ENCODE measurements at regions of chr5 and their contacts with region 1.

Region 1: DNA sequence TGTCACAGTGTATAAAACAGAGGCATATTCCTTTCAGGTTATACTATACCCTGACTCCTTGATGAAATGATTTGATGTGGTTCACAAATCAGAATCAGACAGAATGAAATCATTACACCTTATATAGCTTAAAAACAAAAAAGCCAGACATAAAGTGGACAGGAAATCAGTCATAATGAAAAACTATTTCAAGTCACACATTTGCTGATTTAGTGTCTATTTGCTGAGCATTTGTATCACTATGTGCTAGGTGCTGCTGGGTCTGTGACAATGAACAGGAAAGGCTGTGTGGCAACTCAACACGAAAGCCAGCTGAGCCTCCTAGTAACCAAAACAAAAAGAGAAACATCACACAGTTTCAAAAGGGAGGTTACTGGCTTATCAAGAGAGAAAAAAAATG is 194.0 kb downstream of the EFNA5 start:
- DNase-seq: peak; percentile 80
- ATAC-seq: peak; percentile 90
- H3K4me3 ChIP-seq: no peak overlapping the region
- H3K27ac ChIP-seq: peak overlapping the region; percentile 50
- H3K4me1 ChIP-seq: peaks cover 23% of the 10 kb centered on the region
- H3K27me3 ChIP-seq: no peaks in the 10 kb centered on the region; a peak in 1 of 4 replicates
- CTCF ChIP-seq: no peak
- EP300 ChIP-seq: peak; percentile 83 to 99
- POLR2A ChIP-seq: no peak
- RAD21 ChIP-seq: 0 out of 2 replicates have a peak, but pooled peaks have one; percentile 4

Region 2: DNA sequence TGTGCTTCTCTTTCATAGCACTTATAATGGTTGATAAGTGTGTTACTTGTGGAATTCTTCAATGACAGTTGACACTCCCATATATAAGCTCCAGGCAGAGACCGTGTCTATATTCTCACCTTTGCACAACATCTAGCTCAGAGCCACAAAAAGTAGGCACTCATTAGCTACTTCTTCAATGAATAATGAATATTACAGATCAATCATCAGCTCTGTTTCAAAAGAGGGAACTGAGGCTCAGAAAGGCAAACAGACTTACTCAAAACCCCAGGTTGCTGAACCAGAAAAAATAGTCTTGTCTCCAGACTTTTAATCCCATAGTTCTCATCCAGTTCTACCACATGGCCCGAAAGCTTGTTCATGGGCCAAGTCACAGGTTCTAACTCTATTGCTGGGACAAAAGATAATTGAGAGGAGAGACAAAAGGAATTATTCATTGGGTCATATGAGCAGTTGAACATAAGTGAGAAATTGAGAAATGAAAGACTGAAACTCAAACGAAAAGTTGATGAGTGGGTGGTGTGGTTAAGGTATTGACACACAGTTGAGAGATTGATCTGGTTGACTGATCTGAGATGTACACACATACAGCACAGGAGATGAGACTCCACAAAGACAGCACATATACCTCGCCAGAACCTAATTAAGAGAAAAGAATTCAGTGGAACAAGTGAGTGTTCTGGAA is 187.6 kb before region 1 on chr5:
- CTCF ChIA-PET with region 1: no interaction called
- POLR2A ChIA-PET with region 1: no interaction called
- RAD21 ChIA-PET with region 1: interaction called, 4 read pairs
- SMC1A ChIA-PET with region 1: interaction called, 6 read pairs
- in situ Hi-C with region 1: no loop called
- intact Hi-C with region 1: loop called (anchors 5 kb)
- DNase-seq: peak; percentile 91
- ATAC-seq: peak; percentile 94
- H3K4me3 ChIP-seq: no peak overlapping the region
- H3K27ac ChIP-seq: peak overlapping the region; percentile 14; the same call in 1 of the 2 replicates
- H3K4me1 ChIP-seq: peaks cover 23% of the 10 kb centered on the region
- H3K27me3 ChIP-seq: no peaks in the 10 kb centered on the region; a peak in 1 of 4 replicates
- CTCF ChIP-seq: no peak
- EP300 ChIP-seq: peak; percentile 92 to 95
- POLR2A ChIP-seq: no peak
- RAD21 ChIP-seq: no peak

Region 3: GRCh38 chr5:107389130-107389774 is 87.5 kb before region 1 on chr5:
- CTCF ChIA-PET with region 1: interaction called, 4 read pairs
- POLR2A ChIA-PET with region 1: interaction called, 4 read pairs
- RAD21 ChIA-PET with region 1: interaction called, 40 read pairs
- SMC1A ChIA-PET with region 1: interaction called, 8 read pairs
- in situ Hi-C with region 1: no loop called
- intact Hi-C with region 1: loop called (anchors 2 kb)
- DNase-seq: peak; percentile 92
- ATAC-seq: peak; percentile 82
- H3K4me3 ChIP-seq: peak overlapping the region; percentile 43
- H3K27ac ChIP-seq: peak overlapping the region; percentile 69
- H3K4me1 ChIP-seq: peaks cover 22% of the 10 kb centered on the region
- H3K27me3 ChIP-seq: no peaks in the 10 kb centered on the region
- CTCF ChIP-seq: peak in 1 of 3 experiments; percentile 27; a peak in 1 of 6 replicates
- EP300 ChIP-seq: peak; percentile 89 to 90; a peak in 2 of 4 replicates
- POLR2A ChIP-seq: no peak
- RAD21 ChIP-seq: peak; percentile 50

Region 4: GRCh38 chr5:107431998-107432397 is 44.8 kb before region 1 on chr5:
- CTCF ChIA-PET with region 1: no interaction called
- POLR2A ChIA-PET with region 1: interaction called, 4 read pairs
- RAD21 ChIA-PET with region 1: interaction called, 3 read pairs
- SMC1A ChIA-PET with region 1: interaction called, 11 read pairs
- in situ Hi-C with region 1: no loop called
- intact Hi-C with region 1: no loop called
- DNase-seq: no peak
- ATAC-seq: no peak
- H3K4me3 ChIP-seq: no peak overlapping the region
- H3K27ac ChIP-seq: no peak overlapping the region
- H3K4me1 ChIP-seq: no peaks in the 10 kb centered on the region
- H3K27me3 ChIP-seq: no peaks in the 10 kb centered on the region
- CTCF ChIP-seq: no peak
- EP300 ChIP-seq: no peak
- POLR2A ChIP-seq: no peak
- RAD21 ChIP-seq: no peak

Region 5: DNA sequence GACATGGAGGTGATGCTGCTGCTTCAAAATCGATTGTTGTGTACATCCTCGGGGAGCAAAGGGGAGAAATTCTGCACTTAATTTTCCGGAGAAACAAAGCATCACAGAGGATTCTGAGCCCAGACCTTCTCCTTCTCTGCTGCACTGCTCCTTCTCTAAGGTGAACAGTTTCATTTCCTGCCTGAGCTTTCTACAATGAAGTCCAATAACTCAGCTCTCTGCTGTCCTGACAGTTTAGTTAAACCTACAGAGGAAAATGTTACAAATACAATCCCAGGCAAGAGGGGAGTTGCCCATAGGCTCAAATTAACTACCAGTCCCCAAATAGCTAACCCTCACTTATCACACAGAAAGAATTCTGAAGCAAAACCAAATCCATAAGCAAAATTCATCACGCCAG is 12.4 kb before region 1 on chr5:
- CTCF ChIA-PET with region 1: interaction called, 6 read pairs
- POLR2A ChIA-PET with region 1: interaction called, 7 read pairs
- RAD21 ChIA-PET with region 1: interaction called, 13 read pairs
- SMC1A ChIA-PET with region 1: interaction called, 18 read pairs
- in situ Hi-C with region 1: no loop called
- intact Hi-C with region 1: no loop called
- DNase-seq: no peak
- ATAC-seq: peak; percentile 66
- H3K4me3 ChIP-seq: no peak overlapping the region
- H3K27ac ChIP-seq: no peak overlapping the region
- H3K4me1 ChIP-seq: peaks cover 3% of the 10 kb centered on the region; the same call in 1 of the 2 replicates
- H3K27me3 ChIP-seq: no peaks in the 10 kb centered on the region
- CTCF ChIP-seq: no peak
- EP300 ChIP-seq: no peak
- POLR2A ChIP-seq: no peak
- RAD21 ChIP-seq: no peak

Region 6: DNA sequence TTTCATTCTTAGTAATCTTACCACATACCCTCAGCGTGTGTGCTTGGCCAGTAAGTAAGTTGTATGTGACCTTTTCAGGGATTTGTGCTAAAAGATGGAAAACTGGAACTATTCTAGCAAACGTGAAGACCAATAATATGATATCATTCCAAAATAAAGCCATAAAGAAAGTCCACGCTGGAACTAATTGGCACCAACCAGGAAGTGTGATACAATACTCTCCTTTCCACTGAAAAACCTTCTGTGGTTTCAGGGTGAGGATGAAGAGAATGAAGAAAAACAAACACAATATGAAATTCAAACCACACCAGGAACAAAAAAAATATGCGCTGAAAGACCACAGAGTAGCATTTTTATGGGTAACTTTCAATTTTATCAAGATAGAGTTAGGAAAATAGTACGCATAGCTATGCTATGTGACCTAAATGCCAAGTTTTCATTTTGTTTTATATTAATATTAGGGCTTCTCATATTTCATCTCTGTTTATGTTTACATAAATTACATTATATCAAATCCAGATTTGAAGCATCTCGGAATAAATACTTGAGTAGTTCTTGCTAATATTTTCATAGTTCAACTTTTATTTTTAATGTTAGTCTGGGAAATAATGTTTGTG is 88.2 kb after region 1 on chr5:
- CTCF ChIA-PET with region 1: interaction called, 6 read pairs
- POLR2A ChIA-PET with region 1: interaction called, 7 read pairs
- RAD21 ChIA-PET with region 1: interaction called, 7 read pairs
- SMC1A ChIA-PET with region 1: interaction called, 53 read pairs
- in situ Hi-C with region 1: no loop called
- intact Hi-C with region 1: loop called (anchors 1 kb)
- DNase-seq: no peak
- ATAC-seq: no peak
- H3K4me3 ChIP-seq: no peak overlapping the region
- H3K27ac ChIP-seq: no peak overlapping the region
- H3K4me1 ChIP-seq: peaks cover 13% of the 10 kb centered on the region
- H3K27me3 ChIP-seq: no peaks in the 10 kb centered on the region
- CTCF ChIP-seq: no peak
- EP300 ChIP-seq: no peak
- POLR2A ChIP-seq: no peak
- RAD21 ChIP-seq: no peak

Measured in GM12878 (cell line).